GM18951 (cell line): ENCODE measurements at regions of chr9 and their contacts with region 1.

Region 1: DNA sequence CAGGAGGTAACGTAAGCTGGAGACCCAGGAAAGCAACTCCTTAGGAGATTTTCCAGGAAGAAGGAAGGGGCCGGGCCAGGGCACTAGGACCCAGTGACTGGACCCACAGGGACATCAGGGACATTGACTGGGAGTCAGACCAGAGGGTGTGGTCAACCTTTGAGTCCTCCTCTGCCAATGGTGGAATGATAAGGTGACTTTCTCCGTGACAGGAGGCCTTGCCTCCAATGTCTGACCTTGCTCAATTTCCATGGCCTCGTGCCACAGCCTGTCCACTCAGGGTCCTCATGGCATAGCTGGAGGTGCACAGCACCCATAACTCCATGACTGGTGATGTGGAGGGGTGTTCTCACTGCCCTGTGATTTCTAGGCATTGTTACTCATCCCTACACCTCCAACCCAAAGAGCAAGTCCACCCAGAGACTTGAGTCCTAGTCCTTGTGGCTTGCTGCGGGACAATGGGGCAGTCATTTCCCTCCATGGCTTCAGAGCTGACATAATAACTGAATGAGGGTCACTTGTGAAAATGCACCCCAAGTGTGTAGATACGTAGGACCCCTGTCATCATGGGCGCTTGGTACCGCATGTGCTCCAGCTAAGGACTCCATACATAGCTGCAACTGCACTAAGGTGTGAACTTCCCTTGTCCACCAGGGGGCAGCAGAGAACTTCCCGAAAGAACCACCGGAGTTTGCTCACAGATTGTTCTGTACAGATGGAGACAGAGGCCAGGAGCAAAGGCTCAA is 4.1 kb upstream of the AMBP start:
- POLR2A ChIP-seq: no peak

Region 2: GRCh38 chr9:113695901-113696300 is 386.3 kb before region 1 on chr9:
- in situ Hi-C with region 1: no loop called
- POLR2A ChIP-seq: no peak

Region 3: GRCh38 chr9:114282926-114283325 is 200.7 kb after region 1 on chr9:
- in situ Hi-C with region 1: loop called (anchors 10 kb)
- POLR2A ChIP-seq: no peak